Activated B cell treated with CpG ODN at 0.5 μM for 24 hours (primary cell): ENCODE measurements at regions of chr16 and their contacts with region 1.

Region 1: DNA sequence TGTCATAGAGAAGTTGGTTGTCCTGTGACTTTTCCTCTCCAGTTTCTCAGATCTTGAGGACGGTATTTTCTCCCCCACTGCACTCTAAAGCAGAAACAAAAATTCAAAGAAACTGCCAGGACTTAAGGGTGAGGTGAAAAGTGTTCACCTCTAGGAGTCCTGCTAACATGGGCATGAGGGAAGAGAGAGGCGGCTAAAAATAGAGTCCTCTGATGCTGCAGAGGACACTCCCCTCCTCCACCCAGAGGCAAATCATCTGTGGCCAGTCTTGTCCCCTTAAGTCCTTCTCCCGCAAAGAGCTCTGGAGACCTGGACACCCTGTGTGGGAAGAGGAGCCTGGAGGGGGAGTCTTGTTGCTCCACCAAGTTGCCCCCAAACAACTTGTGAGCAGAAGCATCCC is 4.7 kb upstream of the DDX19A start:
- DNase-seq: no peak
- ATAC-seq: no peak
- H3K4me3 Mint-ChIP-seq: no peak overlapping the region
- H3K27ac Mint-ChIP-seq: no peak overlapping the region
- H3K4me1 Mint-ChIP-seq: peaks cover 9% of the 10 kb centered on the region
- H3K27me3 Mint-ChIP-seq: no peaks in the 10 kb centered on the region
- CTCF ChIP-seq: no peak

Region 2: DNA sequence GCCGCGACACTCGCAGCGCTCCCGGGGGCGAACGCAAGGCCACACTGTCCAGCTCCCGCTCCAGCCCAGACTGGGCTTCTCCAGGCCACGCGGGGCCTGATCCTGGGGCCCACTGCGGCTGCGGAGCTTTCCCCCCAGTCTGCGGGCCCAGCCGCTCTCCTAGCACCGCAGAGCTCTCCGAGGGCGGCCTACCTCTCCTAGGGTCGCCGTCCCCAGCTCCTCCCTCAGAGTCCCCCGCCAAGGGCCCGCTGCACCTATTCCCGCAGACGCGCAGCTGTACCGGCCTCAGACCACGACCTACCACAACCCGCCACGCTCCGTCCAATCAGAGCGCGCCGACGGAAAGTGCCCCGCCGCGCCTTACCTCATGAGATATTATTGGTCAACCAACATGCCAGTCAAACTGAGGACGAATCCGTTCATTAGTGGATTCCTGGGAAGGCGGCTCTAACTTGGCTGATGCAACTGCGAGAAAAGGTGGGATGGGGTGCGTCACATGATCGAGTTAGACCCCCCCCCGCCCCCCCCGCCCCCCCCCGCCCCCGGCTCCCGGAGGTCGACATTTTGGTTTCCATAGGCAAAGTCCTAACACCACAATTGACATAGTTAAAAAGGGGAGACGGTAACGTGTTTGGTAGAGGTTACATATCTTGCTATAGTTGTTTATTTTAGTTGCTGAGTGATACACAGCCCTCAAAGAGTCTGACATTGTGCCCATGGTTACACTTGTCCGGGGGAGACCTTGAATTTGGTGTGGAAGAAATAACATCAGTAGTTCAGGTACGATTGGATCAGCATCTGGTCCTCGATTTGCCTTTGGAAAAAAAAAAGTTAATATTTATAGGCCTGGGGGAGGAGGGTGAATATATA is 52.6 kb before region 1 on chr16 and contains the start of gene AARS1:
- CTCF ChIA-PET with region 1: no interaction called
- POLR2A ChIA-PET with region 1: interaction called, 39 read pairs
- intact Hi-C with region 1: loop called (anchors 2 kb)
- DNase-seq: peak; percentile 84
- ATAC-seq: peak; percentile 96
- H3K4me3 Mint-ChIP-seq: peak within 1 kb of the TSS; percentile 98
- H3K27ac Mint-ChIP-seq: peak within 1 kb of the TSS; percentile 96
- H3K4me1 Mint-ChIP-seq: peaks cover 16% of the 10 kb centered on the region
- H3K27me3 Mint-ChIP-seq: no peaks in the 10 kb centered on the region
- CTCF ChIP-seq: no peak
- total RNA-seq, gene AARS1: 152 and 154 TPM in 2 replicates

Region 3: DNA sequence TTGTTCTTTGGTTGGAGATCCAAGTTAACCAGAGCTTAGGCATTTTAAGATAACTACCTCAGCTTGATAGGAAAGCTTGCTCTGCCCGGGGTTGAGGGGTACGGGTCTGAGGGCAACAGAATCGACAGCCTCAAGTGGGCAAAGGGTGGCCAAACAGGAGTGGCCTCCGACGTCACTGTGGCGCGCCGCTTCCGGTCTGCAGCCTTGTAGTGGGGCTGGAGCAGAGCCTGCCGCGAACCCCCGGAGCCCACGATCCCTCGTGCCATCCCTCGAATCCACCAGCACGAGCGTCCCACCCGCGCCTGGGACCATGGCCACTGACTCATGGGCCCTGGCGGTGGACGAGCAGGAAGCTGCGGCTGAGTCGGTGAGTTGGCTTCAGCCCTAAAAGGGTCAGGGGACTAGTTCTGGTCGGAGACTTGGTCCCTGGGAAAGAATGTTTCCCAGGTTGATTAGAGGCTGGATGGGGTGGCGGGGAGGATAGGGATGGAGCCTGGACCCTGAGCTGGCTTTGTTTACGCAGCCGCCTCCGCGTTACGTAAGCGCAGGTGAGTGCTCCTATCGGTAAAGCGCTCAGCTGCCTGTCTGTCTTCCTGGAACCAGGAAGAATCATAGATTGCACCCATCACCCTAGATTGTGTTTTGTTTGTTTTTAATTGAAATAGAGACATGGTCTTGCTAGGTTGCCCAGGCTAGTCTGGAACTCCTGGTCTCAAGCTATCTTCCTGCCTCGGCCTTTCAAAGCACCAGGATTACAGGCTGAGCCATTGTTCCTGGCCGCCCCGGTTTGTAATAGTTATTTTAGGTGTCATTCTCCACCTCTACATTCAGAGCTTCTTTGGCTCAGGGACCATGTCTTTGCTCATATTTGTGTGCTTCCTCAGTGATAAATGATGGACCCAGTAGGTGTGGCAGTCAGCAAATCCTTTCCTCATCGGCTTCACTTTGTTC is 42.8 kb before region 1 on chr16 and contains the start of gene DDX19B:
- CTCF ChIA-PET with region 1: interaction called, 3 read pairs
- POLR2A ChIA-PET with region 1: interaction called, 60 read pairs
- intact Hi-C with region 1: loop called (anchors 1 kb)
- DNase-seq: peak; percentile 59
- ATAC-seq: peak; percentile 91
- H3K4me3 Mint-ChIP-seq: peak within 1 kb of the TSS; percentile 95
- H3K27ac Mint-ChIP-seq: peak within 1 kb of the TSS; percentile 95
- H3K4me1 Mint-ChIP-seq: peaks cover 33% of the 10 kb centered on the region
- H3K27me3 Mint-ChIP-seq: no peaks in the 10 kb centered on the region
- CTCF ChIP-seq: no peak
- total RNA-seq, gene DDX19B: 33.7 and 42.2 TPM in 2 replicates

Region 4: GRCh38 chr16:70438969-70439862 is 97.2 kb after region 1 on chr16 and contains the start of gene ST3GAL2:
- CTCF ChIA-PET with region 1: no interaction called
- POLR2A ChIA-PET with region 1: interaction called, 8 read pairs
- intact Hi-C with region 1: loop called (anchors 1 kb)
- DNase-seq: peak; percentile 90
- ATAC-seq: peak; percentile 96
- H3K4me3 Mint-ChIP-seq: peak within 1 kb of the TSS; percentile 96
- H3K27ac Mint-ChIP-seq: peak within 1 kb of the TSS; percentile 86
- H3K4me1 Mint-ChIP-seq: peaks cover 39% of the 10 kb centered on the region
- H3K27me3 Mint-ChIP-seq: no peaks in the 10 kb centered on the region
- CTCF ChIP-seq: no peak
- total RNA-seq, gene ST3GAL2: 51.5 and 57.4 TPM in 2 replicates